ENCODE measurements at regions of chrX and their contacts with region 1.

Region 1: DNA sequence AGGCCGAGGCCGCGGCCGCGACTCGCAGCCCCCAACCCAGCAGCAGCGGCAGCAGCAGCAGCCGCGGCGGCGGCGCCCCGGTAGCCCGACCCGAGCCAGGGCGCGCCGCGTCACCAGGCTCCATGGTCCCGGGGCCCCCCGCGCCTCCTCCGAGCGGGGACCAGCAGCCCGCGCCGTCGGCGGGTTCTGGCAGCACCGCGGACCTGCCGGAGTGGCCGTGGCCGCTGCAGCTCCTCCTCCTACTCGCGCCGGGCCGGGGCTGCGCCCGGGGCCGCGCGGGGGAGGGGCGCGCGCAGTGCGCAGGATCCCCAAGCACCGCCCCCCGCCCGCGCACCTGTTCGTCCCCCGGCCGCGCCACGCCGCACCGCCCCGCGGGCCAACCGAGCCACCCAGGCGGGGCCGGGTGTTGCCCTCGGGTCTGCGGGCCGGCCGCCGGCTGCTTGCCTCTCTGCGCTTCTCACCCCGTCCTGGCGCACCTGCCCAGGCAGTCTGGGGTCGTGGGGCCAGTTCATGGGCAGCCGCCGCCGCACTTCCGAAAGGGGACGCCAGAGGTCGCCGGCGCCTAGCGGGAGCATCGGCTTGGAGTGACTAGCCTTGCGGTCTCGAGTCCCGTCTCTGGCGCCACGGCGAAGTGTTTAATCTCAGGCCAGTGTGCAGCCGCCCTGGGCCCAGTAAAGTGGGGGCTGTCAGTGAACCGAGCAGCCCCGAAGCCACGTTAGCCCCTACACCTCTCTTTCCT is at the start of gene SLC9A7:
- H3K4me3 ChIP-seq: peak within 1 kb of the TSS; percentile 71
- H3K27ac ChIP-seq: peak within 1 kb of the TSS; percentile 71; the same call in 1 of the 2 replicates
- H3K4me1 ChIP-seq: peaks cover 5% of the 10 kb centered on the region
- CTCF ChIP-seq: peak; percentile 94

Region 2: DNA sequence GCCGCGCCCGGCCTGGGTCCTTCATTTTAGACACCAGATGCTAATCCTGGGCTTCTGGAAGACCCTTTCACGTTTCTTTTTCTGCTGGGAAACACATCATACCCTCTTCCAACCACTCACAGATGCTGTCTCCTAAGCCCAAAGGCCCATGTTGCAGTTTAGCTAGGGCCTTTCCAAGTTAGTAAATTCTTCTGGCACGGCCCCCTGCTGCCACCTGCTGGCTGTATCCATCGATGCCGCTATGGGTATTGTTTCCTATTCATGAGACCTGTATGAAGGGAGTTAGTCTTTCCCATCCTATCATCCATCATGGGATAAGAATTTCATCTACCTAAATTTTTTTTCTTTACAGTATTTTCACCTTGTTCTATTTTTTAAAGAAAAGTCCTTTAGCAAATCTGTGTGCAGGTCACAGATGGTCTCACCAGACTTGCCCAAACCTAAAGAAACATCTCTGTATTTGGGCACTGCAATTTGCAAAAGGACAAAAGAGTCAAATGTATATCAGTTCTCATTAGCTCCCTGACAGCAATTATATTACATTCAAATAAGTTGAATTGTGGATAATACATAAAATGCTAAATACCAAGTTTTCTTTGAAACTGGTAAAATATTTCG is 37.6 kb after region 1 on chrX:
- CTCF ChIA-PET with region 1: interaction called, 37 read pairs
- POLR2A ChIA-PET with region 1: interaction called, 3 read pairs
- H3K4me3 ChIP-seq: no peak overlapping the region
- H3K27ac ChIP-seq: no peak overlapping the region
- H3K4me1 ChIP-seq: no peaks in the 10 kb centered on the region
- CTCF ChIP-seq: peak; percentile 59

Region 3: GRCh38 chrX:46873746-46874145 is 114.7 kb after region 1 on chrX:
- CTCF ChIA-PET with region 1: no interaction called
- POLR2A ChIA-PET with region 1: no interaction called
- H3K4me3 ChIP-seq: no peak overlapping the region
- H3K27ac ChIP-seq: no peak overlapping the region
- H3K4me1 ChIP-seq: no peaks in the 10 kb centered on the region
- CTCF ChIP-seq: no peak

Measured in HEK293 (cell line).